A549 (cell line): ENCODE measurements at regions of chr11 and their contacts with region 1.

Region 1: DNA sequence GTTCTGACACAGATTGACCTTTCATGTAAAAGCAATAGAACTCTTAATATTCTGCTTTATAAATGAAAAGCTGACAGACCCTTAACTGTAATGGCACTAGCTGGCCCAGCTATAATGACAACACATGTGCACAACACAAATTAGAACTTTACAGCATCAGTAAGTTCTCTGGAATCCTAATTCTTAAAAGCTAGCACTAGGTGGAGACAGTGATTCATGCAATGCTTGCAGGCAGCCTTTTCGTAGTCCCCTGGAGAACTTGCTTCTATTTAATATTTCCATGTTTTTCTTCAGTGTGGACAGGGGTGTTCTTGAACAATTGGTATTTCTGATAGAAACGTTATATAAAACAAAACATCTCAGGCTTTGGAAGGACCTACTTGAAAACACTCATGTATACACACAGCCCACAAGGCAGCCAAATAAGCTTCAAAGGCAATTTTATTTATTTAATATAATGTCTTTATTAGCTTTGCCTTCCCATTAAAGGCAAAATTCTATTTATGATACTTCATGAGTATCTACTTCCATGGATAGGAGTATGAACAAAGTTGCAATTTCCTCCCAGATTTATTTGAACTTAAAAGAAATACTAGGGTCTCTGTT is 374.3 kb upstream of the MPPED2 start:
- DNase-seq: peak; percentile 14 to 75
- ATAC-seq: peak; percentile 70 to 85; a peak in 5 of 6 replicates
- H3K4me3 ChIP-seq: no peak overlapping the region
- H3K27ac ChIP-seq: no peak overlapping the region; a peak in 1 of 6 replicates
- H3K4me1 ChIP-seq: no peaks in the 10 kb centered on the region
- CTCF ChIP-seq: peak; percentile 83
- EP300 ChIP-seq: no peak
- POLR2A ChIP-seq: no peak
- RAD21 ChIP-seq: peak; percentile 92 to 94

Region 2: GRCh38 chr11:30710221-30710620 is 250.3 kb before region 1 on chr11:
- CTCF ChIA-PET with region 1: no interaction called
- POLR2A ChIA-PET with region 1: no interaction called
- DNase-seq: no peak
- ATAC-seq: no peak
- H3K4me3 ChIP-seq: no peak overlapping the region
- H3K27ac ChIP-seq: no peak overlapping the region
- H3K4me1 ChIP-seq: no peaks in the 10 kb centered on the region
- CTCF ChIP-seq: no peak
- EP300 ChIP-seq: no peak
- POLR2A ChIP-seq: no peak
- RAD21 ChIP-seq: no peak

Region 3: GRCh38 chr11:30917859-30918478 is 42.5 kb before region 1 on chr11:
- CTCF ChIA-PET with region 1: no interaction called
- POLR2A ChIA-PET with region 1: no interaction called
- DNase-seq: peak; percentile 6 to 47
- ATAC-seq: peak; percentile 56 to 81; a peak in 4 of 6 replicates
- H3K4me3 ChIP-seq: no peak overlapping the region
- H3K27ac ChIP-seq: no peak overlapping the region
- H3K4me1 ChIP-seq: no peaks in the 10 kb centered on the region
- CTCF ChIP-seq: peak; percentile 78
- EP300 ChIP-seq: no peak
- POLR2A ChIP-seq: no peak
- RAD21 ChIP-seq: peak; percentile 68 to 72

Region 4: DNA sequence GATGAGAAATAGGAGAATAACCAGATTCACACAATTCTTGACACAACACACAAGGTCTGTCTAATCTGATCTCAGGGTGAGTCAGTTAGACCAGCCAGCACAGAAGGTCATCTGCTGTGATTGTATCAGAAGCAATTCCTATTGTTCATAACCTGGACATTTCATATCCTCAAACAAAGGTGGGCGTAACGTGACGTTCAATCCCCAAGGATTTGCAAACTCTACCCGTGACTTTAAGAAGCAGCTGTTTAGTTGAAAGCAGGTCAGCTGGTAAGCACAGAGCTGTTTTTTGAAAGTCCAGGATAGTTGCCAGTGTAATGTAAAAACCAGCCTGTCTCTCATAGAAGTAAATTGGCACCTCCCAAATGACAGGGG is 23.9 kb after region 1 on chr11:
- CTCF ChIA-PET with region 1: no interaction called
- POLR2A ChIA-PET with region 1: no interaction called
- DNase-seq: peak; percentile 25 to 79
- ATAC-seq: peak; percentile 90 to 92
- H3K4me3 ChIP-seq: peak overlapping the region; percentile 31
- H3K27ac ChIP-seq: peak overlapping the region; percentile 68 to 77
- H3K4me1 ChIP-seq: peaks cover 35% of the 10 kb centered on the region
- CTCF ChIP-seq: no peak
- EP300 ChIP-seq: no peak
- POLR2A ChIP-seq: no peak
- RAD21 ChIP-seq: no peak

Region 5: GRCh38 chr11:31045335-31045734 is 84.8 kb after region 1 on chr11:
- CTCF ChIA-PET with region 1: interaction called, 14 read pairs
- POLR2A ChIA-PET with region 1: no interaction called
- DNase-seq: peak in 1 of 2 experiments; percentile 29
- ATAC-seq: no peak
- H3K4me3 ChIP-seq: no peak overlapping the region
- H3K27ac ChIP-seq: no peak overlapping the region
- H3K4me1 ChIP-seq: no peaks in the 10 kb centered on the region
- CTCF ChIP-seq: peak; percentile 24; the same call in 1 of the 3 replicates
- EP300 ChIP-seq: no peak
- POLR2A ChIP-seq: no peak
- RAD21 ChIP-seq: peak in 1 of 2 experiments; percentile 36; a peak in 3 of 5 replicates

Region 6: GRCh38 chr11:31233424-31233823 is 272.9 kb after region 1 on chr11:
- CTCF ChIA-PET with region 1: interaction called, 12 read pairs
- POLR2A ChIA-PET with region 1: no interaction called
- DNase-seq: peak in 1 of 2 experiments; percentile 52
- ATAC-seq: peak; percentile 78 to 88
- H3K4me3 ChIP-seq: no peak overlapping the region
- H3K27ac ChIP-seq: no peak overlapping the region
- H3K4me1 ChIP-seq: peaks cover 8% of the 10 kb centered on the region; the same call in 2 of the 3 replicates
- CTCF ChIP-seq: peak; percentile 49
- EP300 ChIP-seq: no peak
- POLR2A ChIP-seq: no peak
- RAD21 ChIP-seq: peak; percentile 35 to 37; a peak in 3 of 5 replicates